ENCODE measurements at regions of chr7 and their contacts with region 1.

Region 1: DNA sequence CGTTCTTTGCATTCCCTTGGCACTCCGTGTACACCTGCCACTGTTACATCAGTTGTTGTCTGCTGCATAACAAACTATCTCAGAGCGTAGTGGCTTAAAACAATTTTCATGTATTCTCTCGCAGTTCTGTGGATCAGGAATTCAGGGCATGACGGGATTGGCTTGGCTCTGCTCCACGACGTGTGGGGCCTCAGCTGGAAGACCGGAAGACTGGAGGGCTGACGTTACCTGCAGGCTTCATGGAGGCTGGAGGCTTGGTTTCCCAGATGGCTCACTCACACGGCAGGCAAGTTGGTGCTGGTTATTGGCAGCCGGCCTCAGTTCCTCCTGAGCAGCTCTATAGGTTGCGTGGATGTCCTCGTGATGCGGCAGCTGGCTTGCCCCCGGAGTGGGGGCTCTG is 25.5 kb downstream of the NYAP1 start:
- DNase-seq: peak; percentile 93
- H3K4me3 ChIP-seq: no peak overlapping the region
- H3K27ac ChIP-seq: no peak overlapping the region
- H3K4me1 ChIP-seq: peaks cover 8% of the 10 kb centered on the region
- H3K27me3 ChIP-seq: no peaks in the 10 kb centered on the region
- CTCF ChIP-seq: no peak

Region 2: DNA sequence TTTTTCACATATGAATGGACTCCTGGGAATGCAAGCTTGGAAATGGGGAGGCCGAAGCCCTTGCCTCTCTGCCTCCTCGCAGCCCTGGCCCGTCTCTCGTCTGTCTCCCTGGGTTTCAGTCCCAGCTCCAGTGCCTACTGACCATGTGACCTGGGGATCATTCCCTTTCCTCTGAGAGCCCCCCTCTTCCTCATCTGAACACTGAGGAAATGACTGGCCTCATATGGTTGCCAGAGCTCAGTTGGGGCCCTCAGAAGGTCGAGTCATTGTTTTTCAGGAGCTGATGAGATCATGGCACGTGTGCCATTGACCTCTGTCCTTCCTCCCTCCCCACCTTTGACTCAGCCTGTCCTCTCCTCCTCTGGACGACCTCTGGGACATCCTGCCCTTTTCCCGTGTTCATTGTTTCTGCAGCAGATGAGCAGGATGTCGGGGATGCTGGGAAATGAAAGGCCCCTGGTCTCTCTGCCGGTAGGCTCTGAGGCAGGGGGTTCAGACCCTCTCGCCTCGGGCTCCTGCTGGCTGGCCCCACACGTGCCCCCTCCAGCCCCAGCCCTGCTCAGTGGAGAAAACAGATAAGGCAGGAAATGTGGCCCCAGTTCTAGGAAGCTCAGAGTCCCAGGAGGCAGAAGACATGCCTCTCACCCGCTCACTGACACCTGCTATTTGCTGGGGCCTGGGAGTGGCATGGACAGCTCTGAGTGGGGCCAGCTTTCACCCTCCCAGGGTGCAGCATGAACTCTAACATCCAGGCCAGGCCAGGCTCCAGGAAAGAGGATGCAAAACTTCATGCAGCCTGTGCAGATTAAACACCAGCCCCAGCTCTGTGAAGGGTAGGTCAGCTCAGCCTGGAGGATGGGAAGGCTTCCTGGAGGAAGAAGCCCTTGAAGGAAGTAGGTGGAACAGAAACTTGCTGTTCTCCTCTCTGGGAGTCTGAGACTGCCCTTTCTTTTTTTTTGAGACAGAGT is 64.6 kb before region 1 on chr7:
- CTCF ChIA-PET with region 1: no interaction called
- dilution Hi-C with region 1: loop called (anchors 10 kb)
- in situ Hi-C with region 1: no loop called
- intact Hi-C with region 1: no loop called
- DNase-seq: no peak
- H3K4me3 ChIP-seq: no peak overlapping the region
- H3K27ac ChIP-seq: no peak overlapping the region
- H3K4me1 ChIP-seq: no peaks in the 10 kb centered on the region
- H3K27me3 ChIP-seq: no peaks in the 10 kb centered on the region
- CTCF ChIP-seq: no peak

Region 3: GRCh38 chr7:100464210-100464660 is 45.0 kb before region 1 on chr7 and contains the start of gene SPACDR:
- CTCF ChIA-PET with region 1: no interaction called
- dilution Hi-C with region 1: loop called (anchors 5 kb)
- in situ Hi-C with region 1: no loop called
- intact Hi-C with region 1: no loop called
- DNase-seq: no peak
- H3K4me3 ChIP-seq: no peak within 1 kb of the TSS
- H3K27ac ChIP-seq: no peak within 1 kb of the TSS
- H3K4me1 ChIP-seq: no peaks in the 10 kb centered on the region
- H3K27me3 ChIP-seq: no peaks in the 10 kb centered on the region
- CTCF ChIP-seq: no peak
- total RNA-seq, gene SPACDR: 0.59 TPM in 1 of 2 donors, not detected in the other

Region 4: DNA sequence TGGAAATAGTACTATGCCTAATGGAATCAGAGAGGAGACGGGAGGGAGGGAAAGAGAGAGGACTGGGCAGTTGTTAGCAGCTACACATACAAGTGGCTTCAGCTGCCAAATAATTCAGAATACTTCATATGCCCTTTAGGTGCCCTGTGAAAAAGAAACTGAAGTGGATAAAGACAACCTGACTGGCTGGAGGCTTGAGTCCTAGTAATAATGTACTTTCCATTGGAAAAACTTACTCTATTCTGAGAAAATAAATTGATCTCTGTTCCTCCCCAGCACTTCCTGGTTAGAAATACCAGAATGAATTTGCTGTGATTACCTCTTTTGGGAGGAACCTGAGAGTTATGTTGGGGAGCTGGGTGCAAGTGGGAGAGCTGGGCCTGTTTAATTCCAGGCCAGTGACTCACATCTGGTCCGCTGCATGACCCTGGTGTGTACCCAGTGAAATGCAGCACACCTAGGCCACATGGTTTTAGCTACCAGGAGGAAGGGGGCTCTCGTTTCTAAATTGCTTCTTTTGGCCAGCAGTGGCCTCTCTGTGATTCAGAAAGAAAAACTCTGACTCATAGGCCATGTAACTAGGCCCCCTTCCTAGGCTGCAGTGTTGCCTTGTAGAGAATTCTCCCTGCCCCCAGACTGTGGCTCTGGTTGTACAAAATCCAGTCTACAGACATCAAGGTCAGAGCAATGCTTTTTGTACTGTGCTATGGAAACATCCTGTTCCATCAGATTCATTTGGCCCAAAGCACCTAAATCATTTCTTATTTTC is 36.3 kb after region 1 on chr7:
- CTCF ChIA-PET with region 1: no interaction called
- dilution Hi-C with region 1: loop called (anchors 5 kb)
- in situ Hi-C with region 1: no loop called
- intact Hi-C with region 1: no loop called
- DNase-seq: peak; percentile 85
- H3K4me3 ChIP-seq: no peak overlapping the region
- H3K27ac ChIP-seq: peak overlapping the region; percentile 62
- H3K4me1 ChIP-seq: peaks cover 27% of the 10 kb centered on the region
- H3K27me3 ChIP-seq: no peaks in the 10 kb centered on the region
- CTCF ChIP-seq: no peak

Measured in mammary epithelial cell (primary cell).